Calu3 (cell line): ENCODE measurements at regions of chr9 and their contacts with region 1.

Region 1: DNA sequence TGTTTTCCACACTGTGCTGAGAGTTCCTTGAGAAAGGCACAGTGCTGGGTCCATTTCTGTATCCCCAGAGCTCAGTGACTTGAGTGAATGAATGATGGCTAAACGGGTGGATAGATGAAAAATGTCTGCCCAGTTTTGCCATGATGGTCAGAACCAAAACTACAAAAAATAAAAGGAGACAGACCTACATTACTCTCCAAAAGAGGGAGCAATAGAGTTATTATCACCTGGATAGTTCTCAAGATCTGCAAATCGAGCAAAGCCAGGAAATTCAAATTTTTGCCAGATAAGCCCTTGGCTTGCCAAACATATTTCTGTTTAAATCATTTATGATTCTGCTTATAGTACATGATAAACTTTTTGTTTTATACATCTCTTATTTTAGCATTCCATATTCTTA is 214.2 kb upstream of the ZNF462 start:
- DNase-seq: no peak
- H3K4me3 Mint-ChIP-seq: no peak overlapping the region
- H3K27ac Mint-ChIP-seq: no peak overlapping the region
- H3K4me1 Mint-ChIP-seq: no peaks in the 10 kb centered on the region
- H3K27me3 Mint-ChIP-seq: no peaks in the 10 kb centered on the region
- CTCF ChIP-seq: no peak

Region 2: DNA sequence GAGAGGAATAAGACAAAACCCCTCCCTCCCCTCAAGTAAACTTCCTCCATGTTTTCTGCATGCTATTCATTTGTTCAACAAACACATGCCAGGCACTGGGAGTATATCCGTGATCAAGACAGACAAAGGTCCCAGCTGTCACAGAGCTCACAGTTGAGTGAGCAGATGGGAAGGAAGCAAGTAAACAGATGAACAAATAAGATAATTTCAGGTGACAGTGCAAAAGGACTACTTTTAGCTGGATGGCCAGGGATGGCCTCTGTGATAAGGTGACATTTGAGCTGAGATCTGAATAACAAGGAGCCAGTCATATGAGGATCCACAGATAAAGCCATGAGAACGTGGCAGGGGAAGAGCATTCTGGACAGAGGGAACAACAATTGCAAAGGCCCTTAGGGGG is 512.5 kb after region 1 on chr9:
- CTCF ChIA-PET with region 1: no interaction called
- intact Hi-C with region 1: loop called (anchors 10 kb)
- DNase-seq: no peak
- H3K4me3 Mint-ChIP-seq: no peak overlapping the region
- H3K27ac Mint-ChIP-seq: no peak overlapping the region
- H3K4me1 Mint-ChIP-seq: no peaks in the 10 kb centered on the region
- H3K27me3 Mint-ChIP-seq: peaks cover 17% of the 10 kb centered on the region
- CTCF ChIP-seq: no peak